ENCODE measurements at regions of chrX and their contacts with region 1.

Region 1: DNA sequence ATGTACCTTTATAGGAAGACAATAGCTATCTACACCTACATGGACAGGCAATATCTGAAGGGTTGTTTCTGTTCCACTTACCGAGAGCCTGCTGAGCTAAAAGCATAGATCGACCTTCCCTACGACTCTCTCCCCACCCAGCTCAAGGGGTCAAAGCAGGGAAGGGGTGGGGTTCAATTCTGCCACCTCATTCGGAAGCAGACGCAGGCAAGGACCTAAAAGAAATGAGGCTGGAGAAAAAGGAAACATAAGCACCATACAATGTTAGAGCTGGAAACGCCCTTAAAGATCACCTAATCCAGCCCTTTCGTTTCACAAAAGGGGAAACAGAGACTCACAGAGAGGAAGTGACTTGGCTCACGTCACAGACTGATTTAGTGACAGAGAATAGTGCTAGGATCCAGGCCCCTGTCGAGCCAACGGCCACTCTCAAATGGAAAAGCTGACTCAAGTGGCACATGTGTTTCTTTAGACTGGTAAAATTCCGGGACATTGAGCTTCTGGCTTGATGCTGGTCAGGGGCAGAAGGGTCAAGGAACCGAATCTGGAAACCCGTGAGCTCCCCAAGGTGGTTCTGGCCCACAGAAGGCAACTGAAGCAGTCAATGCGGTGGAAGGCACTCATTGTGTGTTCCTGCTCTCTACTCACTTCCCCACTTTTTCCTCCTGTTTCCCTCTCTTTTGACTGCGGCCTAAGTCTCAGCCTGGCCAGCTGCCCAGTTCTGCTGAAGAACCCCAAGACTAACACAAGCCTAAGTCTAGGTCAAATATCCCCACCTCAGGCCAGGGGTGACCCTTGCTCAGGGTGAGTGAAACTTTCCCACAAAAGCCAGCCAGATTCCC is 7.5 kb downstream of the SEPTIN6 start:
- DNase-seq: peak in 2 of 4 experiments; percentile 46 to 65
- ATAC-seq: peak; percentile 66
- H3K4me3 ChIP-seq: peak overlapping the region; percentile 2; the same call in 1 of the 2 replicates
- H3K27ac ChIP-seq: peak overlapping the region; percentile 89
- H3K4me1 ChIP-seq: peaks cover 10 to 43% of the 10 kb centered on the region in 2 experiments; a peak in 4 of 5 replicates
- H3K27me3 ChIP-seq: no peaks in the 10 kb centered on the region
- CTCF ChIP-seq: no peak
- EP300 ChIP-seq: no peak
- POLR2A ChIP-seq: peak; percentile 57
- RAD21 ChIP-seq: no peak

Region 2: GRCh38 chrX:119211649-119212014 is 473.8 kb before region 1 on chrX:
- CTCF ChIA-PET with region 1: no interaction called
- POLR2A ChIA-PET with region 1: no interaction called
- in situ Hi-C with region 1: no loop called
- intact Hi-C with region 1: no loop called
- DNase-seq: no peak
- ATAC-seq: no peak
- H3K4me3 ChIP-seq: no peak overlapping the region
- H3K27ac ChIP-seq: no peak overlapping the region
- H3K4me1 ChIP-seq: 0 out of 5 replicates have a peak, but pooled peaks cover 0 to under 1% of the 10 kb centered on the region in 2 experiments
- H3K27me3 ChIP-seq: peaks cover 2 to 7% of the 10 kb centered on the region in 2 experiments; a peak in 2 of 5 replicates
- CTCF ChIP-seq: no peak
- EP300 ChIP-seq: no peak
- POLR2A ChIP-seq: no peak
- RAD21 ChIP-seq: no peak

Region 3: DNA sequence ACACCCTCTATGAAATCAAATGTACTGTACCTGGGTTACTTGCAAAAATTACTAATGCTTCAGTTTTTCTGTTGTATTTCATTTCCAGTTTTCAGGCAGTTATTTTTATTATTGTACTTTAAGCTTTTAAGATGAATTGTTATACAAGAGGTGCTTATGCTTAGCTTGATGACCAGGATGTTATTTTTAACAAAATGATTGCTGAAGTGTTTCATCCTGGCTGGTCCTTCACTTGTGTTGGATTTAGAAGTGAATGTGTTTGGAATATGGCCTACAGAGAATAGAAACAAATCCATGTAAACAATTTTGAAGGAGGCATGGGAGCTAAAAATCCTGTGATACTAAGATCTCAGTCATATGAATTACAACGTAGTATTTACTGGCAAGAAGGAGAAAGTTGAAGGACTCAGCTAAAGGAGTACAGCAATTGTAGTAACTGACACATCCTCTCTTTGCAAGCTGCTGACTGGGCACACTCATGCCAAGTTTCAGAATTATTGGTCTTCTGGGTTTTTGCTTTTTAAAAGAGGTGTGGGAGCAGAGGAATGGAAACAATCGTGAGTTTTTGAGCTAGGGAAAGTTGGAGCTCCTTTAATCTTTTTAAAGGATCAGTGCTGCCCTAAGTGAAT is 101.9 kb before region 1 on chrX:
- CTCF ChIA-PET with region 1: no interaction called
- POLR2A ChIA-PET with region 1: no interaction called
- in situ Hi-C with region 1: no loop called
- intact Hi-C with region 1: no loop called
- DNase-seq: no peak
- ATAC-seq: no peak
- H3K4me3 ChIP-seq: no peak overlapping the region
- H3K27ac ChIP-seq: no peak overlapping the region
- H3K4me1 ChIP-seq: no peaks in the 10 kb centered on the region
- H3K27me3 ChIP-seq: no peaks in the 10 kb centered on the region
- CTCF ChIP-seq: no peak
- EP300 ChIP-seq: no peak
- POLR2A ChIP-seq: no peak
- RAD21 ChIP-seq: no peak

Region 4: DNA sequence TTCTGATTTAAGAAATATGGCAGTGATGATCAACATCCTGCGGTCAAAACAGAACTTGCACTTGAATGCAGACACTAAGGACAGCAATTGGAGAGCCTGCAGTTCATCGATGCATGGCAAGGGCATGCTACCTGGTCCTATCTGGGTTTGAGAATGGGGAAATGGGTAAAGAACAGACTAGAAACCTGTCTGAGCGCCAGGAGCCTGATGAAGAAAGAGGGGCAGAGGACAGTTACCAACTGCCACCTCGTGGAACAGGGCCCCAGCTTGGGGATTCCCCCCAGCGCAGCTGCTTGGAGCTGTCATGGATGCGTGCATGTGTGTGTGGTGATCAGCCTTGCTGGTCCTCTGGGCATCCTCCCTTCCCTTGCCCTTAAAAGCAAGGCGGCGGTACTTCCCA is 49.0 kb before region 1 on chrX:
- CTCF ChIA-PET with region 1: no interaction called
- POLR2A ChIA-PET with region 1: no interaction called
- in situ Hi-C with region 1: no loop called
- intact Hi-C with region 1: no loop called
- DNase-seq: no peak
- ATAC-seq: no peak
- H3K4me3 ChIP-seq: no peak overlapping the region
- H3K27ac ChIP-seq: no peak overlapping the region
- H3K4me1 ChIP-seq: no peaks in the 10 kb centered on the region
- H3K27me3 ChIP-seq: no peaks in the 10 kb centered on the region
- CTCF ChIP-seq: no peak
- EP300 ChIP-seq: no peak
- POLR2A ChIP-seq: no peak
- RAD21 ChIP-seq: no peak

Region 5: DNA sequence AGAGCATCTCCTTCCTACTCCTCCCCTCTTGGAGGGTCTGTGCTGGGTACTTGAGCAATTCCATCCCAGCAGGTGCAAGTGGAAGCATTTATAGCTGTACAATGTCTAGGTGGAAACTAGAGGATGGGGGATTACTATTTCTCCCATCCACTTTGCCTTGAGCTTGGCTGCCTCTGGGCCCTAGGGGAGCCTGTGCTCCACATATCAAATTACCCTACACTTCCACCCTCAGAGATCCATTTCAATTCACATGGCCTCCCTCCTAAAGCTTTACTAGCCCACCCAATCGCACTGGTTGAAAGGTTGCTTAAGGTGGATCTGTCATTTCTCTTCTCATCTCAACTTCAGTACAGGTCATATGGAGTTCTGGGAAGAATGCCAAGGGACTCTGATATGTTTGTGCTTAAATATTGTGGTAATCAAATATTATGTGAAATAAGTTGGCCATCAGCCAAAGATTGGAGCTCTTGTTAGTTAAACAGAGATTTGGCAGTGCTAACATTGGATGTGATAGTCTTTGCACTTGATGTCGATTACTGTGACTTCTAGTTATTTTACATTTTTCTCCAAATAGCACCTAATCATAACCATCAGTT is 13.1 kb before region 1 on chrX:
- CTCF ChIA-PET with region 1: no interaction called
- POLR2A ChIA-PET with region 1: interaction called, 39 read pairs
- in situ Hi-C with region 1: no loop called
- intact Hi-C with region 1: no loop called
- DNase-seq: no peak
- ATAC-seq: no peak
- H3K4me3 ChIP-seq: no peak overlapping the region
- H3K27ac ChIP-seq: no peak overlapping the region
- H3K4me1 ChIP-seq: no peaks in the 10 kb centered on the region; a peak in 3 of 5 replicates
- H3K27me3 ChIP-seq: no peaks in the 10 kb centered on the region
- CTCF ChIP-seq: no peak
- EP300 ChIP-seq: no peak
- POLR2A ChIP-seq: no peak
- RAD21 ChIP-seq: no peak